PC-9 (cell line): ENCODE measurements at regions of chr7 and their contacts with region 1.

Region 1: GRCh38 chr7:87910138-87910537 is 23.9 kb upstream of the ADAM22 start:
- DNase-seq: no peak
- H3K4me3 ChIP-seq: no peak overlapping the region
- H3K27ac ChIP-seq: no peak overlapping the region
- H3K4me1 ChIP-seq: no peaks in the 10 kb centered on the region
- H3K27me3 ChIP-seq: no peaks in the 10 kb centered on the region
- CTCF ChIP-seq: no peak

Region 2: GRCh38 chr7:87687653-87688254 is 222.4 kb before region 1 on chr7:
- CTCF ChIA-PET with region 1: no interaction called
- POLR2A ChIA-PET with region 1: no interaction called
- intact Hi-C with region 1: no loop called
- DNase-seq: no peak
- H3K4me3 ChIP-seq: no peak overlapping the region
- H3K27ac ChIP-seq: no peak overlapping the region
- H3K4me1 ChIP-seq: no peaks in the 10 kb centered on the region
- H3K27me3 ChIP-seq: no peaks in the 10 kb centered on the region
- CTCF ChIP-seq: no peak

Region 3: DNA sequence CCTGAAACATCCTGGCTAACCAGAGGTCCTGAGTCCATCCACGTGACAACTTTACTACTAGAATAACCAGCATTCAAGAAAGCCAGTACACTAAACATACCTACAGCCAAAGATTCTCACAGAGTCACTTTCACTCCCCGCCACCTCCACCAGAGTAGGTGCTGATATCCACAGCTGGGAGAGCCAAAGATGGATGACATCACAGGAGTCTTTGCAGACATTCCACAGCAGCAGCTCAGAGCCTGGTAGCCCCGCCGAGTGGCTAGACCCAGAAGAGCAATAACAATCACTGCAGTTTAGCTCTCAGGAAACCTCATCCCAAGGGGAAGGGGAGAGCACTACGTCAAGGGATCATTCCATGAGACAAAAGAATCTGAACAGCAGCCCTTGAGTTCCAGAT is 10.4 kb after region 1 on chr7:
- CTCF ChIA-PET with region 1: no interaction called
- POLR2A ChIA-PET with region 1: interaction called, 24 read pairs
- intact Hi-C with region 1: no loop called
- DNase-seq: no peak
- H3K4me3 ChIP-seq: no peak overlapping the region
- H3K27ac ChIP-seq: no peak overlapping the region
- H3K4me1 ChIP-seq: no peaks in the 10 kb centered on the region
- H3K27me3 ChIP-seq: no peaks in the 10 kb centered on the region
- CTCF ChIP-seq: no peak